GM12878 (cell line): ENCODE measurements at regions of chr2 and their contacts with region 1.

Region 1: DNA sequence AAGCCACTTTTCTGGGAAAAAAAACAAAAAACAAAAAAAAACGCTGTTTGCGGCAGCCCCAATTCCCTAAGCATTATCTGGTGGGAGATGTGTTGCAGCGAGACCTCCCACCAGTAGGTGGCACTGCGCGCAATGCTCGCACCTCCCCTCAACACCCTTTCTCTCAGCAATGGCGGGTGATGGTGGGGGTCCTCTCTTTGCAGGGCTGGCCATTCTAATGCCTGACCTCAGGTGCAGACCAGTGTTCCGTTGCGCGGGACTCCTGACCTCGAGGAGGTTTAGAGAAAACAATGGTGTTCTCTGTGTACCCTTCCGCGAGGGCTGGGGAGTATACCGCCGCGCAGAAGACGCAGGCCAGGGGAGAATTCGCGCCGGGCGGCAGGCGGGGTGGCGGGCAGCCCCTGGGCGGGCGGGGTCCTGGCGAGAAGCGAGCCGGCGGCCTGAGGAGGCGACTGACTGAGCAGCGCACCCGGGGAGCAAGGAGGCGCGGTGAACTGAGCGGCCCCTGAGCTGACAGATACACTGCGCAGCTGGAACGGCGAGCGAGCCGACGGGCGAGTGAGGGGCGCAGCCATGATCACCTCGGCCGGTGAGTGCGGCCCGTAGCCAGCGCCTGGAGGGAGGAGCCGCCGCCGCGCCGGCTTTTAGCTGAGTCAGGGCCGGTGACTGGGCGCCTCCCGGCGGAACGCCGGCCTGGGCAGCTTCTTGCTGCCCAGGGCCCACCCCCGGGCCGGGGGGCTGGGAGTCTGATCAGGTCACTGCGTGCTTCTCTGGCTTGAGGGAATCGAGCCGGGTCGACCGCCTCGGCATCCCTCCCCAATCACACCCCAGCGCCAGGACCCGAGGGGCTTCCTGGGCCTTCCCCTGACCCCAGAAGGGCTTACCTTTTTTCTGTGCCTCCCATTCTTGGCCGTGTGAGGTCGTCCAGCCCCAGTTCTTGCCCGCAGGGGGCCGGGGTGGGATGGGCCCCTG is at the start of gene PSMD1:
- DNase-seq: peak; percentile 80
- ATAC-seq: peak; percentile 87
- H3K4me3 ChIP-seq: peak within 1 kb of the TSS; percentile 90
- H3K27ac ChIP-seq: peak within 1 kb of the TSS; percentile 92
- H3K4me1 ChIP-seq: peaks cover 8% of the 10 kb centered on the region; the same call in 1 of the 2 replicates
- H3K27me3 ChIP-seq: no peaks in the 10 kb centered on the region
- CTCF ChIP-seq: peak; percentile 89 to 98 (median 94)
- EP300 ChIP-seq: 0 out of 4 replicates have a peak, but pooled peaks of 1 of the 2 experiments have one; percentile 10
- POLR2A ChIP-seq: peak; percentile 92
- RAD21 ChIP-seq: no peak
- polyA plus RNA-seq, gene PSMD1: 96.4 to 220 TPM

Region 2: DNA sequence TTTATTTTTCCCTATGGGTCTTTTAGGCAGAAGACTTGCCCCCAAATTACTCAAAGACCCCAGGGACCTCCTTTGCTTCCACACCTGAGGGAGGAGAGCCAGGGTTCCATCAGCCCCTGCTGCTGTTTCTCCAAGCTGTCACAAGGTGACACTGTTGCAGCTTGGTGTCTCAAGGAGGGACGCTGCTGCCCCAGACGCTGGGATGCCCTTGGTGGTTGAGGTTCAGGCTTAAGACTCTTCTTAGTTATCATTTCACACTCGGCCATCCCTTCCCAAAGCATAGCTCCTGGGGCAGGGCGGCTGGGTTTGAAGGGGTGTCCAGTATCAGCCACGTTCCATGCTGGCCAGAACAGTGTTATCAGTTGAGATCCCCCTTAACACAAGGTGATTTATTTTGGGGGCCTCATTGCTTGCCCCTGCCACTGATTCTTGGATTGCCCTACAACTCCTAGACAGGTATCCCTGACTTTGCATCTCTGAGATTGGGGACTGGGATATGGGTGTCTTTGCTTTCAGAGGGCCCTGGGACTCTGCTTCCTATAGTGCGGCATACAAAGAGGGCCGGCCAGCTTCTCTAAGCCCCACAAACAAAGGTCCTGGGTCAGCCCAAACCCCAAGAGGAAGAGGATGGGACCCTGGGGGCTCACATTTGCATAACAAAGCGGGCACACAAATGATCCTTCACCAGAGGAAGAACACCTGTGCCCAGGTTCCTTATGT is 154.4 kb before region 1 on chr2:
- CTCF ChIA-PET with region 1: interaction called, 14 read pairs
- POLR2A ChIA-PET with region 1: no interaction called
- RAD21 ChIA-PET with region 1: interaction called, 7 read pairs
- SMC1A ChIA-PET with region 1: interaction called, 4 read pairs
- in situ Hi-C with region 1: loop called (anchors 5 kb)
- intact Hi-C with region 1: loop called (anchors 1 kb)
- DNase-seq: no peak
- ATAC-seq: peak; percentile 94
- H3K4me3 ChIP-seq: no peak overlapping the region
- H3K27ac ChIP-seq: no peak overlapping the region
- H3K4me1 ChIP-seq: peaks cover 14% of the 10 kb centered on the region
- H3K27me3 ChIP-seq: no peaks in the 10 kb centered on the region
- CTCF ChIP-seq: peak; percentile 98 to 99 (median 98); a peak in 5 of 6 replicates
- EP300 ChIP-seq: no peak
- POLR2A ChIP-seq: no peak
- RAD21 ChIP-seq: peak; percentile 99

Region 3: DNA sequence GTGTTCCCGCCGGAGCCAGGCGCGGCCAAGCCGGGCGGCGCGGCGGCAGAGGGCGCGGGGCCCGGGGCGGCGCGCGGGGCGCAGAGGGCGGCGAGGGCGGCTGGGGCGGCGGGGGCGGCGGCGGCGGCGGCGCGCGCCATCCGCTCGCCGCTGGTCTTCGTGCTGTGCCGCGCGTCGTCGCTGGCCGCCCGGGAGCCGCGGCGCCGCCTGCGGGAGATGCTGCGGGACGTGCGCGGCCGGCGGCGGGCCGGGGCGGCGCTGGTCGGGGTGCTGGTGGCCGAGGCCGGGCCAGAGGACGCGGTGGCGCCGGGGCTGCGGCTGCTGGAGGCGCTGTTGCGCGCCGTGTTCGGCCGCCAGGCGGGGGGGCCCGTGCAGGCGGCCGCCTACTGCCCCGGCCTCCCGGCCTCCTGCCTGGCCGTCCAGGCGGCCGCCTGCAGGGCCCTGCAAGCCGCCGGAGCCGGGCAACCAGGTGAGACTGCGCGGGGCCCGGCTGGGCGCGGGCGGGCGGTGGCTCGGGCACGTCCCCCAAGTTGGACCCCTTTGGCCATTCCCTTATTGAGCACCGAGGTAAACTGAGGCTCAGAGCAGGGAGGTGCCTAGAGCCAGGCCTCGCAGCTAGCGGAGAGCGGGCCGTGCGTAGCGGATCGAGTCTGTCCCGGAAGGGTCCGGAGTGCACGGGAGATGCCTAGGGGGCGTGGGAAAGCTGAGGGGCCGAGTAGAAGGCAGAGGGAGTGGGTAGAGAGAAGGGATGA is 18.8 kb before region 1 on chr2:
- CTCF ChIA-PET with region 1: interaction called, 16 read pairs
- POLR2A ChIA-PET with region 1: no interaction called
- RAD21 ChIA-PET with region 1: interaction called, 3 read pairs
- SMC1A ChIA-PET with region 1: no interaction called
- in situ Hi-C with region 1: no loop called
- intact Hi-C with region 1: no loop called
- DNase-seq: no peak
- ATAC-seq: peak; percentile 30; the same call in 2 of the 3 replicates
- H3K4me3 ChIP-seq: peak overlapping the region; percentile 22; the same call in 1 of the 2 replicates
- H3K27ac ChIP-seq: no peak overlapping the region
- H3K4me1 ChIP-seq: peaks cover 3% of the 10 kb centered on the region; the same call in 1 of the 2 replicates
- H3K27me3 ChIP-seq: peaks cover 12 to 14% of the 10 kb centered on the region in 2 experiments
- CTCF ChIP-seq: no peak
- EP300 ChIP-seq: no peak
- POLR2A ChIP-seq: no peak
- RAD21 ChIP-seq: no peak

Region 4: GRCh38 chr2:231241755-231242507 is 185.2 kb after region 1 on chr2:
- CTCF ChIA-PET with region 1: no interaction called
- POLR2A ChIA-PET with region 1: no interaction called
- RAD21 ChIA-PET with region 1: no interaction called
- SMC1A ChIA-PET with region 1: no interaction called
- in situ Hi-C with region 1: no loop called
- intact Hi-C with region 1: no loop called
- DNase-seq: no peak
- ATAC-seq: no peak
- H3K4me3 ChIP-seq: no peak overlapping the region
- H3K27ac ChIP-seq: no peak overlapping the region
- H3K4me1 ChIP-seq: no peaks in the 10 kb centered on the region
- H3K27me3 ChIP-seq: no peaks in the 10 kb centered on the region
- CTCF ChIP-seq: no peak
- EP300 ChIP-seq: no peak
- POLR2A ChIP-seq: no peak
- RAD21 ChIP-seq: no peak